ENCODE measurements at regions of chr15 and their contacts with region 1.

Region 1: GRCh38 chr15:74322181-74323076 is 45.0 kb downstream of the CYP11A1 start:
- DNase-seq: no peak
- H3K4me3 ChIP-seq: no peak overlapping the region
- CTCF ChIP-seq: peak; percentile 99

Region 2: DNA sequence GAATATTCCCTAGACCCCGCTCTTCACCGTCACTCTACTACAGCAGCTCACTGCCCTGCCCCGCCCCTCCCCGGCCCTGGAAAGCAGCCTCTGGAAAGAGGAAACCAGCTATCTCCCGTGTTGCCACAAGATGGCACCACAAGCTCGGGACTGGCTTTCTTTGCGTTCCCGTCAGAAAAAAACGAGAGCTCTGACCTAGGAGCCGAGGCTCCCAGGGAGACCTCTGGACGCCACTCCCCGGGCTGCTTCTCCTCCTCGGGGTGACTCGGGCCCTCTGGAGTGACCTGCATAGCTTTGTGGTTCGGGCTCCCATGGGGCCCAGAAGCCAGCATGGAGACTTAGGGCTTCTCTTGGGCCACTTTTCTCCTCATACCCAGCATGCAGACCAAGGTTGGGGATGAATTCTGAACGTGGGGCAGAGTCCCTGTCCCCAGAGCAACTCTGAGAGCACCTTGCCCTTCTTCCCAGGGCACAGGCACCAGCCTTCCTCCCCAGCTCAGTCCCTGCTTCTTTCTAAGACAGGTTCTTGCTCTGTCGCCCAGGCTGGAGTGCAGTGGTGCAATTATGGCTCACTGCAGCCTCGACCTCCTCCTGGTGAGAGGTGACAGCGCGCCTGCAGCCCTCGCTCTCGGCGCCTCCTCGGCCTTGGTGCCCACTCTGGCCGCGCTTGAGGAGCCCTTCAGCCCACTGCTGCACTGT is 349.3 kb before region 1 on chr15:
- CTCF ChIA-PET with region 1: interaction called, 263 read pairs
- POLR2A ChIA-PET with region 1: no interaction called
- DNase-seq: no peak
- H3K4me3 ChIP-seq: peak overlapping the region; percentile 18; the same call in 1 of the 2 replicates
- CTCF ChIP-seq: peak; percentile 91

Region 3: GRCh38 chr15:74053941-74054529 is 268.4 kb before region 1 on chr15:
- CTCF ChIA-PET with region 1: interaction called, 554 read pairs
- POLR2A ChIA-PET with region 1: no interaction called
- DNase-seq: no peak
- H3K4me3 ChIP-seq: no peak overlapping the region
- CTCF ChIP-seq: peak; percentile 79

Region 4: GRCh38 chr15:74134387-74135027 is 187.9 kb before region 1 on chr15:
- CTCF ChIA-PET with region 1: interaction called, 153 read pairs
- POLR2A ChIA-PET with region 1: interaction called, 3 read pairs
- DNase-seq: no peak
- H3K4me3 ChIP-seq: no peak overlapping the region
- CTCF ChIP-seq: peak; percentile 68

Region 5: GRCh38 chr15:74307827-74308644 is 14.4 kb before region 1 on chr15:
- CTCF ChIA-PET with region 1: interaction called, 226 read pairs
- POLR2A ChIA-PET with region 1: no interaction called
- DNase-seq: no peak
- H3K4me3 ChIP-seq: no peak overlapping the region
- CTCF ChIP-seq: peak; percentile 88

Region 6: DNA sequence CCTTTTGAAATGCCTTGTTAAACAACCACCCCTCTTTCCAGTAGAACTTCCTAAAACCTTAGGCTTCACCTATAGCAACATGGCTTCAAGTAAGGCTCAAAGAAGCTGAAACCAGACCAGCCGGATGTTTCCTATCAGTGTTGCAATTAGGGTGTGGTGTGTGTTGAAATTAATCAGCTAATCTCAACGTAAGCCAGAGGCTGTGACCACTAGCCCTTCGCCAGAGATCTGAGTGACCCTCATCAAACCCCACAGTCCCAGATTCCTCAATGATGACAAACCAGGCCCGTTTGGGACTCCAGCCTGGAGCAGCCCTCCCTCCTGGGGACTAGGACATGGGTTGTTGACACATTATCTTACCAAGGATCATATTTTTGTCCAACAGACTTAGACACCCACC is 17.7 kb after region 1 on chr15:
- CTCF ChIA-PET with region 1: interaction called, 14 read pairs
- POLR2A ChIA-PET with region 1: no interaction called
- DNase-seq: no peak
- H3K4me3 ChIP-seq: no peak overlapping the region
- CTCF ChIP-seq: no peak

Region 7: DNA sequence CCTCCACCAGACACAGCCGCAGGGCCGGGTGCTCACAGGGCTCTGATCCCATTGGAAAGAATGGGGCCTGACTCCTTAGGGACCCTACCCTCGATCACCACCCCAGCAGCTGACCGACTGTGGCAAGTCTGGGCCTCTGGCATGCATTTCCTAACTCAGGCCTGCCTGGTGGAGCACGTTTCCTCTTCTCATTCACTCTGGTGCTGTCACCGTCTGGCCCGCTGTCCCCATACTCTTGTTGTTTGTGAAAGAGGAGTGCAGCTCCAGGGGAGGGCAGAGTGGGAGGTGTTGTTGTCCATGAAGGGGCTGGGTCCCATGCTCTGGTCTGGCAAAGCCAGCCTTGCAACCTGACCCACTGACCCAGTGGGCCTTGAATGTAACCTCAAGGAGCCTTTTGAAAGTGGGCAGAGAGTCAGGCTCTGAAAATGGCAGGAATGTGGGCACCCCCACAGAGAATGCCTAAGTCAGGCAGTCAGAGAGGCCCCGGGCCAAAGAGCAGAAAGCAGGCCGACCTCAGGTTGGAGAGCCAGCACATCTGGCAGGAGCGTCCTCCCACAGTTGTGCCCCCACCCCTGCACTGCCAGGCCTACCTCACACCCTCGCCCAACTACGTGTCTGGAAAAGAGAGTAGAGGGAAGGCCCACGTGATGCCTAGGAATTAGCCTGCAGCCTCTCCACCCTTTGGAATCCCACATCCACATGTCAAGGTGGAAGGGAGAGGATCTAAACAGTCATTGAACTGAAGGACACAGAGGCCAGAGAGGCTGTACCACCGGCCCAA is 100.4 kb after region 1 on chr15:
- CTCF ChIA-PET with region 1: no interaction called
- POLR2A ChIA-PET with region 1: no interaction called
- DNase-seq: no peak
- H3K4me3 ChIP-seq: no peak overlapping the region
- CTCF ChIP-seq: no peak

Measured in AG04449 (cell line).